ENCODE measurements at regions of chr9 and their contacts with region 1.

Region 1: DNA sequence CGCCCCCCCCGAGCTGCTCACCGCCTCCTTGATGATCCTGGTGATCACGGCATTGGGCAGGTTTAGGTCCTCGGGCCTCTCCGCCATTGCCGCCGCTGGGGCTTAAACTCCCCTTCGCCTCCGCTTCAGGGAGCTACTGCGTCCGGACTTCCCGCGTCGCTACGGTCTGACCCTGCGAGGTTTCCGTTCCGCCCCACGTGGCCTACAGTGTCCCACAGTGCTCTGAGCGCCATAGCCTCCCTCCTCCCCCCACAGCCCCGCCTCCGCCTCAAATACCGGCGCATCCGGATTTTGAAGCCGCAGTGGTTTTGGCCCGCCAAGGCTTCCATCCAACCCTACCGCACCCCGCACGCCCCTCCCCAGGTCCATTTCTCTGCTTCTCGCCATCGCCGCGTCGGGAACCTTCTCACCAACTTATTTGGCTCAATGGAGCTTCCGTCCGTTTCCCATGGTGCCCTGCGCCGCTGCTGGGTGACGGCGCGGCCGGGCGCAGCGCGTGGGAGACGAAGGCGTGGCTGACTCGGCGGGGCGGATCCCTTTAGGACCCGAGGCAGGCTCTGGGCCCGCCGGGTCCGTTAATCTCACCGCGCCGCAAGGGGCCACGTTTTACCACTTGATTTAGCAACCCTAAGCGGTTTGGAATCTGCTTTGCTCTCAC is at the starts of genes C9orf43 and POLE3:
- DNase-seq: peak; percentile 90 to 98 (median 96)
- ATAC-seq: peak; percentile 95
- H3K4me3 ChIP-seq: peak within 1 kb of the TSS; percentile 92
- H3K4me3 Mint-ChIP-seq: peak within 1 kb of the TSS; percentile 94 to 100 (median 98)
- H3K27ac ChIP-seq: peak within 1 kb of the TSS; percentile 89
- H3K27ac Mint-ChIP-seq: peak within 1 kb of the TSS; percentile 98 to 100 (median 99)
- H3K4me1 ChIP-seq: peaks cover 3 to 9% of the 10 kb centered on the region in 2 donors
- H3K4me1 Mint-ChIP-seq: peaks cover 20 to 42% (median 31%) of the 10 kb centered on the region in 7 donors
- H3K27me3 ChIP-seq: no peaks in the 10 kb centered on the region
- H3K27me3 Mint-ChIP-seq: peaks cover 0 to 2% (median 0%) of the 10 kb centered on the region in 5 donors
- total RNA-seq, gene C9orf43: 0.41 to 0.97 (median 0.61) TPM
- total RNA-seq, gene POLE3: 38.6 to 65.3 (median 50.9) TPM

Region 2: DNA sequence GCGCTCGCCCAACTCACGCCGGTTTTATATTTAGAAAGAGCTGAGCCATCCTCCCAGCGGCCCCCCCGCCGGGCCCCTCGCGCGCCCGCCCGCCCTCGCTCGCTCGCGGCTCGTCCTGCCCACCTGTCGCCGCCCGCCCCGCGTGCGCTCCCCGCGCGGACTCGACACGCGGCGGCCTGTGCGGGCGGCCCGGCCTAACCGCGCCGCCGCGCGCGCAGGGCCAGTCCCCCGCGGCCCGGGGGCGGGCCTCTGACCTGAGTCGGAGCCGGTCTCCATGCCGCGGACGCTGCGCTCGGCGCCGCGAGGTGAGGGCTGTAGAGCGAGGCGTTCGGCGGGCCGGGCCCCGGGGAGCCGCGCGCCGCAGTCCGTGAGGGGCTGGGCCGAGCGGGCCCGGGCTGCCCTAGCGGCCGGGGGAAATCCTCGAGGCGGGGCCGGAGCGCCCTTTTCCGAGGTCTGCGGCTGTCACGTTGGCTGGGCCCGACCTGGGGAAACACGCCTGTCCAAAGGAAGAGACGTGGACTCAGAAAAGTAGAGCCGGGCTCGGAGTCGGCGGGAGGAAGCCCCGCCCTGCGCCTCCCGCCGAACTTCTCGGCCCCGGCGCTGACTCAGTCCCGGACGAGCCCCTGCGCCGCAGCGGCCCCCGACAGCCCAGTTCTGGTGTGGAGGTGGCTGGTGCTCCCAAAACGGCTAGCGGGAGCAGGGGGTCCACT is 1926.3 kb before region 1 on chr9 and contains the start of gene ECPAS:
- CTCF ChIA-PET with region 1: no interaction called
- POLR2A ChIA-PET with region 1: no interaction called
- intact Hi-C with region 1: loop called in 1 of 2 experiments (anchors 2 kb)
- DNase-seq: peak; percentile 53 to 78 (median 62)
- ATAC-seq: peak; percentile 74
- H3K4me3 ChIP-seq: peak within 1 kb of the TSS; percentile 66
- H3K4me3 Mint-ChIP-seq: peak within 1 kb of the TSS; percentile 69 to 93 (median 88)
- H3K27ac ChIP-seq: peak within 1 kb of the TSS; percentile 74
- H3K27ac Mint-ChIP-seq: peak within 1 kb of the TSS; percentile 60 to 92 (median 85)
- H3K4me1 ChIP-seq: peaks cover 0 to 8% of the 10 kb centered on the region in 2 donors
- H3K4me1 Mint-ChIP-seq: peaks cover 16 to 31% (median 27%) of the 10 kb centered on the region in 7 donors
- H3K27me3 ChIP-seq: no peaks in the 10 kb centered on the region
- H3K27me3 Mint-ChIP-seq: peaks cover 0 to 13% (median 5%) of the 10 kb centered on the region in 5 donors
- total RNA-seq, gene ECPAS: 35.4 to 86.1 (median 49.2) TPM

Region 3: GRCh38 chr9:112921549-112921948 is 488.8 kb before region 1 on chr9:
- CTCF ChIA-PET with region 1: no interaction called
- POLR2A ChIA-PET with region 1: no interaction called
- intact Hi-C with region 1: no loop called
- DNase-seq: no peak
- ATAC-seq: peak; percentile 64
- H3K4me3 ChIP-seq: no peak overlapping the region
- H3K4me3 Mint-ChIP-seq: no peak overlapping the region
- H3K27ac ChIP-seq: no peak overlapping the region
- H3K27ac Mint-ChIP-seq: no peak overlapping the region
- H3K4me1 ChIP-seq: no peaks in the 10 kb centered on the region
- H3K4me1 Mint-ChIP-seq: peaks cover 0 to 6% (median 0%) of the 10 kb centered on the region in 7 donors
- H3K27me3 ChIP-seq: no peaks in the 10 kb centered on the region
- H3K27me3 Mint-ChIP-seq: peaks cover 22 to 61% (median 38%) of the 10 kb centered on the region in 5 donors

Region 4: DNA sequence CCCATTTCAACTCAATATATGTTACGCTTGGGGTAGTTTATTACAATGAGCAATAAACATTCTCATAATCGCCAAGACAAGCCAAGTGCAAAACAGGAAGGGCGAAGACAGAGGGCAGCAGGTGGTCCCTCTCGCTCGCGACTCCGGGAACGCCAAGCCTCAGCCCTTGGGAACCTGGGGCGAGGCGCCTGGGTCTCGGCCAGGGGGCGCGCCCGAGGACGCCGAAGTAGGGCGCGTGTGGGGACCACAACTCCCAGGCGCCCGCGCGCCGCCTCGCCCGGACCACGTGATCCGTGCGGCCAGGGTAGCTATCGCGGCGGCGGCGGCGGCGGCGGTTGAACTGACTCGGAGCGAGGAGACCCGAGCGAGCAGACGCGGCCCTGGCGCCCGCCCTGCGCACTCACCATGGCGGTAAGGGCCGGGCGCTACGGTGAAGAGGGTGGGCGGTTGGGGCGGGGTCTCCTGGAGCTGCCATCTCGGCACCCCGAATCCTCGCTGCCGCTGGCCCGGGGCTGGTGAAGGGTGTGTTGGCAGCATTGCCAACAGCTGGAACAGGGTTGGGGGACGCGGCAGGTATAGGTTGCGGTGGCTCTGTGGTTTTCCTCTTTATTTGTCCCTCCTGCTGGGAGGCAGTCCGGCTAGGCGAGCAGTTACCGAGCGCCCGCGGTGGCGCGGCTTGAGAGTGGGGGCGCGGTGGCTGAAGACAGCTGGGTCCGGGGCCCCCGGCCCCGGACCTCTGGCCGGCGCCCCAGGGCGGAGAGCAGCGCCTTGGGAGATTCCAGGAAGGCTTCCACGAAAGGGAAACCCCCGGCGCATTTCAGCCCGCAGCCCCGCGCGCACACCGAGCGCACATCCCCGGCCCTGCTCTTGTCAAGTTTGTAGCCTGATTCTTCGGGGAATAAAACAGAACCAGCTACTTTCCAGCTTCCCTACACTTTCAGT is 259.4 kb before region 1 on chr9 and contains the start of gene SLC31A2:
- CTCF ChIA-PET with region 1: no interaction called
- POLR2A ChIA-PET with region 1: no interaction called
- intact Hi-C with region 1: loop called (anchors 1 to 2 kb)
- DNase-seq: peak; percentile 73 to 93 (median 80)
- ATAC-seq: peak; percentile 92
- H3K4me3 ChIP-seq: peak within 1 kb of the TSS; percentile 78
- H3K4me3 Mint-ChIP-seq: peak within 1 kb of the TSS; percentile 58 to 88 (median 84)
- H3K27ac ChIP-seq: peak within 1 kb of the TSS; percentile 73
- H3K27ac Mint-ChIP-seq: peak within 1 kb of the TSS; percentile 38 to 76 (median 68)
- H3K4me1 ChIP-seq: peaks cover 10 to 15% of the 10 kb centered on the region in 2 donors
- H3K4me1 Mint-ChIP-seq: peaks cover 16 to 42% (median 36%) of the 10 kb centered on the region in 7 donors
- H3K27me3 ChIP-seq: no peaks in the 10 kb centered on the region
- H3K27me3 Mint-ChIP-seq: peaks cover 1 to 6% (median 4%) of the 10 kb centered on the region in 5 donors
- total RNA-seq, gene SLC31A2: 5.3 to 39.2 (median 5.4) TPM

Region 5: GRCh38 chr9:113309204-113309813 is 101.0 kb before region 1 on chr9:
- CTCF ChIA-PET with region 1: interaction called, 3 read pairs
- POLR2A ChIA-PET with region 1: no interaction called
- intact Hi-C with region 1: loop called (anchors 1 kb)
- DNase-seq: peak in 5 of 9 donors; percentile 19 to 45 (median 33)
- ATAC-seq: peak; percentile 57
- H3K4me3 ChIP-seq: no peak overlapping the region
- H3K4me3 Mint-ChIP-seq: no peak overlapping the region
- H3K27ac ChIP-seq: no peak overlapping the region
- H3K27ac Mint-ChIP-seq: no peak overlapping the region
- H3K4me1 ChIP-seq: no peaks in the 10 kb centered on the region
- H3K4me1 Mint-ChIP-seq: no peaks in the 10 kb centered on the region
- H3K27me3 ChIP-seq: no peaks in the 10 kb centered on the region
- H3K27me3 Mint-ChIP-seq: peaks cover 0 to 7% (median 0%) of the 10 kb centered on the region in 5 donors

Region 6: DNA sequence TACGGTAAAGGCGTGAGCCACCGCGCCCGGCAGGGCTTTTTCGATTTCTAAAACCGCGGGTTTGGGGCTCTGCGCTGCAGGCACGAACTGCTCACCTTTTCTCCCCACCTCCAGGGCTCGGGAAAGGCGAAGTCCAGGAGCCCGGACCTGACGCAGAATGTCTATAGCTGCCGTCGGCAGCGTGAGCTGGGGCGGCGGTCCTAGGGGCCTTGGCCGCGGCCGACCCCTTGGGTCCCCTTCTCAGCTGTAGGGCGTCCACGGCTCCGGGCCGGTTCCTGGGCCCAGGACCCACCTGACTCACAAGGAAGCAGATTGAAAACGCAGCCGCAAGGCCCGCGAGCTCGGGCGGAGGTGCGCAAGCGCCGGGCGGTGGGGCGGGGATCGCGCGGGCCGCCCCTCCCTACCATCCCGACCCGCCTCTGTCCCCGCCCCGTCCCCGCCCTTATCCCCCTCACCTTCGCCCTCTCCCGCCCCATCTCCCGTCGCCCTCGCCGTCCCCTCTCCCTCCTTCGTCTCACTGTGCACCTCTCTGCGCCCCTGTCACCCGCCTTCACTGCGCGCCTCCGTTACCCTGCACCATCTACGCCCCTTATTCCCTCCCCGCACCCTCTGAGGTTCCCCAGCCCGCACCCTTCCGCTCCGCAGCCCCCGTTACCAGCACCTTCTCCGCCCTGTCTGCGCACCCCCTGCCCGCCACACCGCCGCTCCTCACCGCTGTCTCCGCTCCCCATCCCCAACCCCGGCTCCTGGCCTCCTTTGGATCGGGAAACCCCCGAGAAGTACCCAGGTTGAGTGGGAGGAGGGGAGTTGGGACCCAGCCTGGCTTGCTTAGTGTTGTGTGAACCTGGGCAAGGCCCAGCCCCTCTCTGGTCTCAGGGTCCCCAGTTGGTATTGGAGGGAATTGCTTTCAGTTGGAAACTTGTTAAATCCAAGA is 33.4 kb before region 1 on chr9 and contains the start of gene HDHD3:
- CTCF ChIA-PET with region 1: no interaction called
- POLR2A ChIA-PET with region 1: interaction called, 13 read pairs
- intact Hi-C with region 1: loop called (anchors 1 kb)
- DNase-seq: peak; percentile 70 to 84 (median 81)
- ATAC-seq: peak; percentile 96
- H3K4me3 ChIP-seq: peak within 1 kb of the TSS; percentile 81
- H3K4me3 Mint-ChIP-seq: peak within 1 kb of the TSS; percentile 82 to 98 (median 90)
- H3K27ac ChIP-seq: peak within 1 kb of the TSS; percentile 94
- H3K27ac Mint-ChIP-seq: peak within 1 kb of the TSS; percentile 68 to 97 (median 85)
- H3K4me1 ChIP-seq: peaks cover 0 to 7% of the 10 kb centered on the region in 2 donors
- H3K4me1 Mint-ChIP-seq: peaks cover 14 to 17% (median 16%) of the 10 kb centered on the region in 7 donors
- H3K27me3 ChIP-seq: no peaks in the 10 kb centered on the region
- H3K27me3 Mint-ChIP-seq: peaks cover 0 to 3% (median 0%) of the 10 kb centered on the region in 5 donors
- total RNA-seq, gene HDHD3: 11.3 to 32.2 (median 20.5) TPM

Region 7: GRCh38 chr9:113388833-113389232 is 21.5 kb before region 1 on chr9:
- CTCF ChIA-PET with region 1: no interaction called
- POLR2A ChIA-PET with region 1: no interaction called
- intact Hi-C with region 1: no loop called
- DNase-seq: no peak
- ATAC-seq: no peak
- H3K4me3 ChIP-seq: no peak overlapping the region
- H3K4me3 Mint-ChIP-seq: no peak overlapping the region
- H3K27ac ChIP-seq: no peak overlapping the region
- H3K27ac Mint-ChIP-seq: no peak overlapping the region
- H3K4me1 ChIP-seq: no peaks in the 10 kb centered on the region
- H3K4me1 Mint-ChIP-seq: peaks cover 0 to 4% (median 0%) of the 10 kb centered on the region in 7 donors
- H3K27me3 ChIP-seq: no peaks in the 10 kb centered on the region
- H3K27me3 Mint-ChIP-seq: no peaks in the 10 kb centered on the region

Region 8: GRCh38 chr9:113425072-113425471 is 14.7 kb after region 1 on chr9:
- CTCF ChIA-PET with region 1: no interaction called
- POLR2A ChIA-PET with region 1: no interaction called
- intact Hi-C with region 1: no loop called
- DNase-seq: no peak
- ATAC-seq: no peak
- H3K4me3 ChIP-seq: no peak overlapping the region
- H3K4me3 Mint-ChIP-seq: no peak overlapping the region
- H3K27ac ChIP-seq: no peak overlapping the region
- H3K27ac Mint-ChIP-seq: no peak overlapping the region
- H3K4me1 ChIP-seq: no peaks in the 10 kb centered on the region
- H3K4me1 Mint-ChIP-seq: peaks cover 0 to 5% (median 0%) of the 10 kb centered on the region in 7 donors
- H3K27me3 ChIP-seq: no peaks in the 10 kb centered on the region
- H3K27me3 Mint-ChIP-seq: peaks cover 0 to 29% (median 6%) of the 10 kb centered on the region in 5 donors

Region 9: GRCh38 chr9:113501129-113501686 is 90.9 kb after region 1 on chr9:
- CTCF ChIA-PET with region 1: no interaction called
- POLR2A ChIA-PET with region 1: no interaction called
- intact Hi-C with region 1: no loop called
- DNase-seq: no peak
- ATAC-seq: no peak
- H3K4me3 ChIP-seq: no peak overlapping the region
- H3K4me3 Mint-ChIP-seq: no peak overlapping the region
- H3K27ac ChIP-seq: no peak overlapping the region
- H3K27ac Mint-ChIP-seq: peak overlapping the region in 1 of 9 donors; percentile 27
- H3K4me1 ChIP-seq: peaks cover 0 to 13% of the 10 kb centered on the region in 2 donors
- H3K4me1 Mint-ChIP-seq: peaks cover 7 to 16% (median 11%) of the 10 kb centered on the region in 7 donors
- H3K27me3 ChIP-seq: no peaks in the 10 kb centered on the region
- H3K27me3 Mint-ChIP-seq: no peaks in the 10 kb centered on the region

Region 10: GRCh38 chr9:113523421-113524236 is 113.3 kb after region 1 on chr9:
- CTCF ChIA-PET with region 1: no interaction called
- POLR2A ChIA-PET with region 1: interaction called, 7 read pairs
- intact Hi-C with region 1: loop called in 1 of 2 experiments (anchors 2 kb)
- DNase-seq: peak in 2 of 9 donors; percentile 27 to 84
- ATAC-seq: peak; percentile 63
- H3K4me3 ChIP-seq: peak overlapping the region; percentile 53
- H3K4me3 Mint-ChIP-seq: peak overlapping the region; percentile 54 to 80 (median 70)
- H3K27ac ChIP-seq: peak overlapping the region; percentile 42
- H3K27ac Mint-ChIP-seq: peak overlapping the region; percentile 64 to 91 (median 79)
- H3K4me1 ChIP-seq: peaks cover 65 to 79% of the 10 kb centered on the region in 2 donors
- H3K4me1 Mint-ChIP-seq: peaks cover 61 to 87% (median 71%) of the 10 kb centered on the region in 7 donors
- H3K27me3 ChIP-seq: no peaks in the 10 kb centered on the region
- H3K27me3 Mint-ChIP-seq: no peaks in the 10 kb centered on the region

Region 11: DNA sequence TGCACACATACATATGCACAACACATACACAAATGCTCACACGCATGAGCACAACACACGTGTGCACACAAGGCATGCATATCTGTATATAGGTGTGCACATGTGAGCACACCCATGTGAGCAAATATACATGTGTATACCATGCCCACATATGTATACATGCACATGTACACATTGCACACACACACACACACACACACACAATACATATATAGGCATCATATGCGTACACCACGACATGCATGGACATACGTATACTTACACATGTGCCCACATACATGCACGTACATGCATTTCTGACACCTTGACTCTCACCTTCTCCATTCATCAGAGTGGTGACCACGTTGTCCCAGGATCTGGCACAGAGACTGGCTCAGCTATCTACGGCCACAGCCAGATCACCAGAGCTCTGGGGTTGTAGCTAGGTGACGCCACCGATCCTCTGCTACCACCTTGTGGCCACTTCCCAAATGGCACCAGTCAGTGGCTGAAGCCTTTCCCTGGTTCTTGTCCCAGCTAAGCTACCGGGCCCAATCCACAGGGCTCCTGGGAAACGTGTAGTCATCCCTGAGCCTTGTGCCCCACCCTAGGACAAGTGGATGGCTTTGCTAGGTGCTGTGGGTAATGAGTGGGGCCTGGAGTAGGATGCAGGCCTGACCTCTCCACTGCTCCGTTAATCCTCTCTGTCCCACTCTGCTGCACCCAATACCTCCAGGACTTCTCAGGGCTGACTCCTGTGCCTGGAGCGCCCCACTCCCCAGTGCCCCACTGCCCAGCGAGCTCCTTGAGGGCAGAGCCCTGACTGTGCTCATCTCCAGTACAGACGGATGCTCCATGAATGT is 247.6 kb after region 1 on chr9:
- CTCF ChIA-PET with region 1: interaction called, 7 read pairs
- POLR2A ChIA-PET with region 1: no interaction called
- intact Hi-C with region 1: loop called in 1 of 2 experiments (anchors 1 kb)
- DNase-seq: peak; percentile 43 to 82 (median 66)
- ATAC-seq: peak; percentile 91
- H3K4me3 ChIP-seq: no peak overlapping the region
- H3K4me3 Mint-ChIP-seq: no peak overlapping the region
- H3K27ac ChIP-seq: no peak overlapping the region
- H3K27ac Mint-ChIP-seq: peak overlapping the region in 1 of 9 donors; percentile 47
- H3K4me1 ChIP-seq: no peaks in the 10 kb centered on the region
- H3K4me1 Mint-ChIP-seq: peaks cover 0 to 9% (median 2%) of the 10 kb centered on the region in 7 donors
- H3K27me3 ChIP-seq: no peaks in the 10 kb centered on the region
- H3K27me3 Mint-ChIP-seq: peaks cover 9 to 23% (median 21%) of the 10 kb centered on the region in 5 donors

Measured in naive thymus-derived CD4-positive, alpha-beta T cell (primary cell).